Endothelial cell of umbilical vein (primary cell): ENCODE measurements at regions of chr17 and their contacts with region 1.

Region 1: DNA sequence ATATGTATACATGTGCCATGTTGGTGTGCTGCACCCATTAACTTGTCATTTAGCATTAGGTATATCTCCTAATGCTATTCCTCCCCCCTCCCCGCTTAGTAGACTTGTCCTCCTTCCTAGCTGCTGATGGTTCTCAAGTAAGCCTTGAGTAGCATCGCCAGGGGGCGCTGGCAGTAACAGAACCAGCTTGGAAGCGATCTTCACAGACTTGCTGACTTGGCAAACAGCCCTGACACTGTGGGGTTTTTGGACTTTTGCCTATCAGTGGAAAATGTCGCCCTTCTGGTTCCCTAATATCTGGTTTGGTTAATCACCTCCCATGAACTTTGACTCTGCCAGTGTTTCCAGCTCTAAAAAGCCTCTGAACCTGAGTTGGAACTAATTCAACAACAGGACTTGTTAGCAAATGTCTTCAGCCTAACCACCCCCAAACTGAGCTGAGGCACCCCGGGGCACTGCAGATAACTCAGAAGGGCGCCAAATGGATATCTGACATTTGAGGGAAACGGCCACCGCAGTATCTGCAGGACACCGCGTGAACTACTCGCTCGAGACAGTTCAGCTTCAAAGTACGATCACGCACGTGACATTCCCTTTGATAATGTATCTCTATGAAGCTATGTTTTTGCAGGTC is 15.4 kb upstream of the SPATA32 start:
- DNase-seq: peak; percentile 93
- H3K4me3 ChIP-seq: no peak overlapping the region
- H3K27ac ChIP-seq: peak overlapping the region; percentile 40
- H3K4me1 ChIP-seq: peaks cover 27% of the 10 kb centered on the region
- H3K27me3 ChIP-seq: no peaks in the 10 kb centered on the region
- CTCF ChIP-seq: peak; percentile 72 to 82
- POLR2A ChIP-seq: no peak

Region 2: GRCh38 chr17:45218895-45219661 is 58.3 kb before region 1 on chr17:
- CTCF ChIA-PET with region 1: interaction called, 48 read pairs
- POLR2A ChIA-PET with region 1: no interaction called
- dilution Hi-C with region 1: no loop called
- intact Hi-C with region 1: no loop called
- DNase-seq: peak; percentile 74
- H3K4me3 ChIP-seq: no peak overlapping the region
- H3K27ac ChIP-seq: no peak overlapping the region
- H3K4me1 ChIP-seq: no peaks in the 10 kb centered on the region
- H3K27me3 ChIP-seq: peaks cover 9 to 21% of the 10 kb centered on the region in 2 experiments
- CTCF ChIP-seq: peak; percentile 86 to 92
- POLR2A ChIP-seq: no peak

Region 3: GRCh38 chr17:45265821-45266220 is 11.5 kb before region 1 on chr17:
- CTCF ChIA-PET with region 1: interaction called, 15 read pairs
- POLR2A ChIA-PET with region 1: no interaction called
- dilution Hi-C with region 1: no loop called
- intact Hi-C with region 1: no loop called
- DNase-seq: no peak
- H3K4me3 ChIP-seq: no peak overlapping the region
- H3K27ac ChIP-seq: no peak overlapping the region
- H3K4me1 ChIP-seq: no peaks in the 10 kb centered on the region
- H3K27me3 ChIP-seq: no peaks in the 10 kb centered on the region
- CTCF ChIP-seq: no peak
- POLR2A ChIP-seq: no peak

Region 4: DNA sequence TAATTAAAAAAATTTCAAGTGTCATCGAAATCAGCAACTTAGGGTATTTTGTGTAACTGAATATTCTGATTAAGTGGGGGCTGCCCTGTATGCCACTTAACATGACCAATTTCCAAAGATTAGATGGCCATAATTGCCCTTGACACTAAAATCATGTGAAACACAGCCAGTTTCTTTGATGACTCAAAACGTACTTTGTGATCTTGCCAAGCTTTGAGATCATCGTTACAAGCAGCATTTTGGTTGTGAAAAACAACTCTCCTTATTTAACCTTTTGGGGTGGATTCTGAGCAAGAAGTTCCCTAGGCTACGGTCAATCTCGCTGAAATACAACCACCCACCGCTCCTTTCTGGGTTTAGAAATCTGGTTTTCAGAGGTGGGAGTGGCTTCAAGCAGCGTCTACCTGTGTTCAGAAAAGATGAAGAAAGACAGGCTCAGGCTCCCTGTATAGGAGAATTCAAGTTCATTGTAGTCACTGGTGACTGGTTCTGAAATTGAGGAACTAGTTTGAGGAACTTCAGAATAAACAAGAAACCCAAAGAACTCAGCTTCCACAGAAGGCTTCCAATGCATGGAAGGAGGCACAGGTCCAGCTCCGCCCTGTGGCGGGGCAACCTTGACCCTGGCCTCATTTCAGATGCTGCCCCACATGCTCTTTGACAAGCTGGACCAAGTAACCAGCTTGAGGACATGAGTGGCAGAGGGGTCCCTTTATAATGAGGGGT is 30.1 kb after region 1 on chr17:
- CTCF ChIA-PET with region 1: interaction called, 47 read pairs
- POLR2A ChIA-PET with region 1: interaction called, 3 read pairs
- dilution Hi-C with region 1: no loop called
- intact Hi-C with region 1: no loop called
- DNase-seq: peak; percentile 88
- H3K4me3 ChIP-seq: no peak overlapping the region
- H3K27ac ChIP-seq: peak overlapping the region; percentile 62
- H3K4me1 ChIP-seq: peaks cover 10% of the 10 kb centered on the region
- H3K27me3 ChIP-seq: no peaks in the 10 kb centered on the region
- CTCF ChIP-seq: no peak
- POLR2A ChIP-seq: no peak

Region 5: GRCh38 chr17:45332989-45333701 is 55.8 kb after region 1 on chr17:
- CTCF ChIA-PET with region 1: interaction called, 18 read pairs
- POLR2A ChIA-PET with region 1: no interaction called
- dilution Hi-C with region 1: no loop called
- intact Hi-C with region 1: no loop called
- DNase-seq: no peak
- H3K4me3 ChIP-seq: no peak overlapping the region
- H3K27ac ChIP-seq: no peak overlapping the region
- H3K4me1 ChIP-seq: peaks cover 16% of the 10 kb centered on the region
- H3K27me3 ChIP-seq: no peaks in the 10 kb centered on the region
- CTCF ChIP-seq: no peak
- POLR2A ChIP-seq: no peak

Region 6: DNA sequence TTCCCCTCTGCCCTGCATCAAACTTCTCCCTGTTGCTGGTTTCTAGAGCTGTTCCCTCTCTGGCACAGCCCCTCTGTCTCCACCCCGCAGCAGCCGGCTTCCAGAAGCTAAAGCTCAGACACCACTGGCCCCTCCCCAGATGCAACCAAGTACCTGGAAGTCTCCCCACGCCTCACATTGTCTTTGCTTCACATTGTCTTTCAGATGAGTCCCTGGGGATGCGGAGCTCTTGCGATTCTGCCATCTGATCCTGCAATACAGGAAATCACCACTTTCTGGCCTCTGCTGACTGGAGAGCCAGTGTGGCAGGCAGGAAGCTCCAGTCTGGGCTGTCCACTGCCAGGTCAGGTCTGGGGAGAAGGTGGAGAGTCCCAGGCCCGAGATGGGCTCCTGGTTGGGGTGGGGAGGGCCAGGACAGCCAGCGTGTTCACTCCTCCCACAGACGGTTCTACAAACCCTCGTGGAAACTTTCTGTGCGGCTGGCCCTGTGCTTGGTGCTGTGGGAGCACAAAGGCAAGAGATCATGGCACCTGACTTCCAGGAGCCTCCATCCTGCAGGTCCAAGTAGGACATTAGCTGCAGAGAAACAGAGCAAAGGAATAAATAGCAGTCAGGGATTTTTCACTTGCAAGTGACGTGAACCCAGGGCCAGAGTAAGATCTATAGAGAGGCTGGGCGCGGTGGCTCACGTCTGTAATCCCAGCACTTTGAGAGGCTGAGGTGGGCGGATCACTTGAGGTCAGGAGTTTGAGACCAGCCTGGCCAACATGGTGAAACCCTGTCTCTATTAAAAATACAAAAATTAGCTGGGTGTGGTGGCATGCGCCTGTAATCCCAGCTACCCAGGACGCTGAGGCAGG is 87.4 kb after region 1 on chr17:
- CTCF ChIA-PET with region 1: interaction called, 67 read pairs
- POLR2A ChIA-PET with region 1: interaction called, 3 read pairs
- dilution Hi-C with region 1: no loop called
- intact Hi-C with region 1: no loop called
- DNase-seq: peak; percentile 30
- H3K4me3 ChIP-seq: no peak overlapping the region
- H3K27ac ChIP-seq: no peak overlapping the region
- H3K4me1 ChIP-seq: peaks cover 5% of the 10 kb centered on the region
- H3K27me3 ChIP-seq: peaks cover 0 to 4% of the 10 kb centered on the region in 2 experiments
- CTCF ChIP-seq: no peak
- POLR2A ChIP-seq: no peak

Region 7: GRCh38 chr17:45385331-45385997 is 108.1 kb after region 1 on chr17:
- CTCF ChIA-PET with region 1: interaction called, 283 read pairs
- POLR2A ChIA-PET with region 1: interaction called, 5 read pairs
- dilution Hi-C with region 1: no loop called
- intact Hi-C with region 1: loop called (anchors 1 kb)
- DNase-seq: peak; percentile 77
- H3K4me3 ChIP-seq: no peak overlapping the region
- H3K27ac ChIP-seq: no peak overlapping the region
- H3K4me1 ChIP-seq: no peaks in the 10 kb centered on the region
- H3K27me3 ChIP-seq: peaks cover 0 to 6% of the 10 kb centered on the region in 2 experiments
- CTCF ChIP-seq: peak; percentile 94 to 97
- POLR2A ChIP-seq: no peak